Activated CD4-positive, alpha-beta T cell treated with anti-CD3 and anti-CD28 coated beads, Interleukin-2, amount 10 ng/mL, durations not matched to agents 24 days and 14 days (primary cell): ENCODE measurements at regions of chr20 and their contacts with region 1.

Region 1: GRCh38 chr20:32207626-32208498 is at the starts of genes PLAGL2 and POFUT1:
- DNase-seq: peak; percentile 98
- H3K4me3 Mint-ChIP-seq: peak within 1 kb of the TSS; percentile 99
- H3K27ac Mint-ChIP-seq: peak within 1 kb of the TSS; percentile 91
- H3K4me1 Mint-ChIP-seq: peaks cover 65% of the 10 kb centered on the region
- H3K27me3 Mint-ChIP-seq: no peaks in the 10 kb centered on the region
- total RNA-seq, gene PLAGL2: 119 and 120 TPM in 2 replicates
- total RNA-seq, gene POFUT1: 65.7 and 68.1 TPM in 2 replicates

Region 2: GRCh38 chr20:31723319-31724078 is 484.4 kb before region 1 on chr20:
- intact Hi-C with region 1: loop called (anchors 5 kb)
- DNase-seq: peak; percentile 99
- H3K4me3 Mint-ChIP-seq: peak overlapping the region; percentile 98
- H3K27ac Mint-ChIP-seq: peak overlapping the region; percentile 98
- H3K4me1 Mint-ChIP-seq: peaks cover 19% of the 10 kb centered on the region
- H3K27me3 Mint-ChIP-seq: no peaks in the 10 kb centered on the region

Region 3: DNA sequence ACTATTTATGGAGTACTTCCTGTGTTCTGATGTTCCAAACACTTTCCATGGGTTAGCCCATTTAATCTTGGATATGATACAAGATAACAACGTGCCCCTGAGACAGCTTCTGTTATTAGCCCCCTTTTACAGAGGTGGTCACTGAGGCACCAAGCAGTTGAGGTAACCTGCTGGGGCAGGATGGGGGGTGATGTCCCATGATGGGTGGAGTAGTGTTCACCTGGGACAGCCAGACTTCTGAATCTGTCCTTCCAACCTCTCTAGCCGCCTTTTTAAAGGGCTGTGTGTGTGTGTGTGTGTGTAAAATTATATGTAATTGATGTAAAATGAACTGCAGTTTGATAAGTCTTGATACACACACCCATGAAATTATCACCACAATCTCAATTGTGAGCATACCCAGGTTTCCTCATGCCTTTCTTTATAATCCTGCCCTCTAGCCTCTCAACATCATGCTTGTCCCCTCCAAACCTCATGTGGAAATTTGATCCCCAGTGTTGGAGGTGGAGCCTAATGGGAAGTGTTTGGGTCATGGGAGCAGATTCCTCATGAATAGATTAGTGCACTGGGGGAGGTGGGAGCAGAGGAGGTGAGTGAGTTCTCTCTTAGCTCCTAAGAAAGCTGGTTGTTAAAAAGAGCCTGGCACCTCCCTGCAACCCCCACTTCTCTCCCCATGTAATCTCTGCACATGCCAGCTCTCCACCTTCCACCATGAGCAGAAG is 39.5 kb before region 1 on chr20:
- intact Hi-C with region 1: no loop called
- DNase-seq: no peak
- H3K4me3 Mint-ChIP-seq: no peak overlapping the region
- H3K27ac Mint-ChIP-seq: no peak overlapping the region
- H3K4me1 Mint-ChIP-seq: peaks cover 3% of the 10 kb centered on the region
- H3K27me3 Mint-ChIP-seq: no peaks in the 10 kb centered on the region

Region 4: DNA sequence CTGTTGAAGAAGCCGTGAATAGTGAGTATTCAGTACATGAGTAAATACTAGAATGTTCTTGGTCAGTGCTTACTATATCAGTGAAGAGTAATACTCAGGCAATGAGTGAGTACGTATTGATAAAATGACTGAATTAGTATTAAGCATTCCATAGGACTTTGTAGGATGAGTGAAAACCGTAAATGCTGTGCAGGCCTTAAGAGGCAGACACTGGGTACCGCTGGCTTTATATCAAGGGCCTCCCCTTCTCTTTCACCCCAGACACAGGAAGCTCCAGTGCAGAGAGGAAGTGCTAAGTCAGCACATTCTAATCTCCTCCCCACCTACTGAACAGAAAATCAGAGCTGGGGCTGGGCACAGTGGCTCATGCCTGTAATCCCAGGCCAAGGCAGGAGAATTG is 24.0 kb after region 1 on chr20:
- intact Hi-C with region 1: loop called (anchors 1 kb)
- DNase-seq: peak; percentile 82
- H3K4me3 Mint-ChIP-seq: peak overlapping the region; percentile 75
- H3K27ac Mint-ChIP-seq: peak overlapping the region; percentile 96
- H3K4me1 Mint-ChIP-seq: peaks cover 29% of the 10 kb centered on the region
- H3K27me3 Mint-ChIP-seq: no peaks in the 10 kb centered on the region

Region 5: GRCh38 chr20:32285621-32286371 is 77.9 kb after region 1 on chr20:
- intact Hi-C with region 1: loop called (anchors 2 kb)
- DNase-seq: peak; percentile 81
- H3K4me3 Mint-ChIP-seq: peak overlapping the region; percentile 59
- H3K27ac Mint-ChIP-seq: peak overlapping the region; percentile 87
- H3K4me1 Mint-ChIP-seq: peaks cover 54% of the 10 kb centered on the region
- H3K27me3 Mint-ChIP-seq: no peaks in the 10 kb centered on the region

Region 6: GRCh38 chr20:32357869-32358631 is 150.2 kb after region 1 on chr20 and contains the start of gene ASXL1:
- intact Hi-C with region 1: loop called (anchors 1 kb)
- DNase-seq: peak; percentile 99
- H3K4me3 Mint-ChIP-seq: peak within 1 kb of the TSS; percentile 90
- H3K27ac Mint-ChIP-seq: peak within 1 kb of the TSS; percentile 100
- H3K4me1 Mint-ChIP-seq: peaks cover 53% of the 10 kb centered on the region
- H3K27me3 Mint-ChIP-seq: no peaks in the 10 kb centered on the region
- total RNA-seq, gene ASXL1: 126 and 142 TPM in 2 replicates

Region 7: GRCh38 chr20:32535953-32536823 is 328.3 kb after region 1 on chr20:
- intact Hi-C with region 1: loop called (anchors 5 kb)
- DNase-seq: peak; percentile 93
- H3K4me3 Mint-ChIP-seq: peak overlapping the region; percentile 79
- H3K27ac Mint-ChIP-seq: peak overlapping the region; percentile 89
- H3K4me1 Mint-ChIP-seq: peaks cover 69% of the 10 kb centered on the region
- H3K27me3 Mint-ChIP-seq: no peaks in the 10 kb centered on the region